ENCODE measurements at regions of chr15 and their contacts with region 1.

Region 1: DNA sequence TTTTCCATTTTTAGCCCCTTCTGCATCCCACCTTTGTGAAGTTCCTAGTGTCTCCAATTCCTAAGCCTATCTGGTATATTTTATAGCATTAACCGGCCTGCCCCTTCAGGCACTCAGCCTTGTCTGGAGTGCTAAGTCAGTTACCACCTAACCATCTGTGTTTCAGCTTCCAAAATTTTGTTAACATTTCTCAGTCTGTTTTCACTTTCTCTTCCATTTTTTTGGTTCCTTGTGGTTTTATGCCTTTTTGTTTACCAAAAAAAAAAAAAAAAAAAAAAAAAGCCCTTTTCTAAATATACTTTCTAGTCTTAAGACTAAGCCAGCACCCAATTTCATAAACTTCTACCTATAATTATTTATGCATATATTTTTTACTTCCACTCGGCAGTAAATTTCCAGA is 92.4 kb downstream of the CSNK1G1 start:
- DNase-seq: no peak
- H3K4me3 Mint-ChIP-seq: no peak overlapping the region
- H3K27ac Mint-ChIP-seq: no peak overlapping the region
- H3K4me1 Mint-ChIP-seq: peaks cover 6% of the 10 kb centered on the region
- H3K27me3 Mint-ChIP-seq: no peaks in the 10 kb centered on the region
- CTCF ChIP-seq: no peak

Region 2: GRCh38 chr15:64247906-64248541 is 15.5 kb before region 1 on chr15:
- CTCF ChIA-PET with region 1: interaction called, 4 read pairs
- POLR2A ChIA-PET with region 1: interaction called, 19 read pairs
- intact Hi-C with region 1: no loop called
- DNase-seq: peak; percentile 80
- H3K4me3 Mint-ChIP-seq: no peak overlapping the region
- H3K27ac Mint-ChIP-seq: peak overlapping the region; percentile 96
- H3K4me1 Mint-ChIP-seq: peaks cover 32% of the 10 kb centered on the region
- H3K27me3 Mint-ChIP-seq: no peaks in the 10 kb centered on the region
- CTCF ChIP-seq: no peak